Activated CD4-positive, alpha-beta T cell treated with anti-CD3 and anti-CD28 coated beads for 36 hours (primary cell): ENCODE measurements at regions of chr3 and their contacts with region 1.

Region 1: DNA sequence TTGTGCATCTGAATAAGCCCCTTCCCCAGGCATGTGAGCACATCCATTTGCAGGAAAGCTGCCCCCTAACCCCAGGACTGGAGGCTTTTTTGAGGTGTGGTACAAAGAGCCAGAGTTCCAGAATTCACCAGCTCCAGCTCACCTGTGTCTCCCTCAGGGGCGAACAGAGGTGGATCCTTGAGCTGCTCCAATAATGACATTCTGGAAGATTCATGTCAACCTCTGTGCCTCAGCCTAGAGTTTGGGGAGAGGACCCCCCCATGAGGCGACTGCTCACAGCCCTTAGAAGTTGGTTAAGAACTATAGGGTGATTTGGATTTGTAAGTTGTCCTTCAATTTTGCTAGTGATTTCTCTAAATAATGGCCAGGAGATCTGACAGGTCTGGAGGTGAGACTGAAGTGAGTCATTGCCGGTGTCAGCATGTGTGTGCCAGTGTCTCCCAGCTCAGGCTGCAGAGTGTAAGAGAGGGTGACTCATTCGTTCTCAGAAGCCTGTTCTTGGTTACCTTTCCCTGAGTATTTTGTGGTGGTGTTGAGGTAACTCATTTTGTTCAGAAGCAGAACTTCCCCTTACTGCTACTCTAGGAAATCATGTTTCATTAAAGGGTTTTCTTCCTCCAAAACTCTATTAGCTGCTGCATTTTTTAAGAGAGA is 136.9 kb upstream of the TOPAZ1 start:
- DNase-seq: peak; percentile 78
- ATAC-seq: peak; percentile 100
- H3K4me3 Mint-ChIP-seq: no peak overlapping the region
- H3K27ac Mint-ChIP-seq: no peak overlapping the region
- H3K4me1 Mint-ChIP-seq: peaks cover 13% of the 10 kb centered on the region
- H3K27me3 Mint-ChIP-seq: peaks cover 31% of the 10 kb centered on the region

Region 2: DNA sequence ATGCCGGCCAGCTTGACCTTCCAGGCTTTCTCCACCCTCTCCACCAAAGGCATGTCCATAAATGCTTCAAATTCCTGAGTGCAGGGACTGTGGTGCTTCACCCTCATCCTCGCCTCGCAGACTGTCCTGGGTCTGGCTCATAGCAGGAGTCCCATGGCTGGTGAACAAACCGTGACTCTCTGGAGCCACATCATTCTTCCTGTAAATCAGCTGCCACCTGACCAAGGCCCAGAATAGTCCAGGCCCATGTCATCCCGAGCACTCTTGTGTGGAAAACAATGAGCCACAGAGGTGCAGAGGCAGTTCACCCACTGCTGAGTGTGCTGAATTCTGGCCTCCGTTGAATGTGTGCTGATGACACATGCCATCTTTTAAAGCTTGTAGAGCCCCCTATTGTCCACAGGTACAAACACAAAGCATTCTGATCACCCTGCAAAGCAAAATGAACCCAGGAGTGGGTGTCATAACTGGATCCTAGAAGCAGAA is 345.5 kb before region 1 on chr3:
- CTCF ChIA-PET with region 1: no interaction called
- POLR2A ChIA-PET with region 1: no interaction called
- intact Hi-C with region 1: loop called in 1 of 2 experiments (anchors 5 kb)
- DNase-seq: peak; percentile 20
- ATAC-seq: peak; percentile 62
- H3K4me3 Mint-ChIP-seq: no peak overlapping the region
- H3K27ac Mint-ChIP-seq: no peak overlapping the region
- H3K4me1 Mint-ChIP-seq: peaks cover 36% of the 10 kb centered on the region
- H3K27me3 Mint-ChIP-seq: no peaks in the 10 kb centered on the region

Region 3: GRCh38 chr3:44058022-44058867 is 46.5 kb before region 1 on chr3:
- CTCF ChIA-PET with region 1: no interaction called
- POLR2A ChIA-PET with region 1: no interaction called
- intact Hi-C with region 1: loop called in 1 of 2 experiments (anchors 2 kb)
- DNase-seq: peak; percentile 61
- ATAC-seq: peak; percentile 95
- H3K4me3 Mint-ChIP-seq: peak overlapping the region; percentile 58
- H3K27ac Mint-ChIP-seq: peak overlapping the region; percentile 39
- H3K4me1 Mint-ChIP-seq: peaks cover 30% of the 10 kb centered on the region
- H3K27me3 Mint-ChIP-seq: peaks cover 8% of the 10 kb centered on the region

Region 4: DNA sequence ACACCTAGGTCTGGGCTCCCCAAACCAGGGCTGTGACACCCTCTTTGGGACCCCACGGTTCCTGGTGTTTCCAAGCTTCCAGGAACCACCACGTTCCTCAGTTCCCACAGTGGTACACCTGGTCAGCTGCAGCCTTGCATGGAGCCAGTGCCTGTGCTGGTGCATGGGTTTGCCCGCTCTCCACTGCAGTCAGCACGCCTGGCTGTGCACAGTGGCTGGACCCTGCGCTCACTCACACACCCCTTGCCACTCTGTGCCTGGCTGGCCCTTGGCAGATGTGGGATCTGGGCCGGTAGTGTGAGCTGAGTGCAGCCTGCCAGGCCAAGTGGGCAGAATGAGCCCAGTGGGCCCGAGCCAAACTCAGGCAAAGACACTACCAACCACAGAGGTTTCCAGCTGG is 282.6 kb after region 1 on chr3:
- CTCF ChIA-PET with region 1: no interaction called
- POLR2A ChIA-PET with region 1: no interaction called
- intact Hi-C with region 1: no loop called
- DNase-seq: no peak
- ATAC-seq: no peak
- H3K4me3 Mint-ChIP-seq: no peak overlapping the region
- H3K27ac Mint-ChIP-seq: no peak overlapping the region
- H3K4me1 Mint-ChIP-seq: no peaks in the 10 kb centered on the region
- H3K27me3 Mint-ChIP-seq: no peaks in the 10 kb centered on the region